SK-N-SH (cell line): ENCODE measurements at regions of chr20 and their contacts with region 1.

Region 1: GRCh38 chr20:63471983-63472831 is at the start of gene KCNQ2:
- DNase-seq: peak; percentile 87
- H3K4me3 ChIP-seq: peak within 1 kb of the TSS in 1 of 2 experiments; percentile 56; a peak in 2 of 4 replicates
- H3K27ac ChIP-seq: peak within 1 kb of the TSS in 1 of 2 experiments; percentile 86; a peak in 2 of 4 replicates
- H3K4me1 ChIP-seq: peaks cover 0 to 55% of the 10 kb centered on the region in 2 experiments; a peak in 1 of 4 replicates
- H3K27me3 ChIP-seq: peaks cover 26% of the 10 kb centered on the region
- CTCF ChIP-seq: no peak
- EP300 ChIP-seq: no peak
- RAD21 ChIP-seq: no peak
- polyA plus RNA-seq, gene KCNQ2: 3.9 and 8.3 TPM in 2 replicates

Region 2: DNA sequence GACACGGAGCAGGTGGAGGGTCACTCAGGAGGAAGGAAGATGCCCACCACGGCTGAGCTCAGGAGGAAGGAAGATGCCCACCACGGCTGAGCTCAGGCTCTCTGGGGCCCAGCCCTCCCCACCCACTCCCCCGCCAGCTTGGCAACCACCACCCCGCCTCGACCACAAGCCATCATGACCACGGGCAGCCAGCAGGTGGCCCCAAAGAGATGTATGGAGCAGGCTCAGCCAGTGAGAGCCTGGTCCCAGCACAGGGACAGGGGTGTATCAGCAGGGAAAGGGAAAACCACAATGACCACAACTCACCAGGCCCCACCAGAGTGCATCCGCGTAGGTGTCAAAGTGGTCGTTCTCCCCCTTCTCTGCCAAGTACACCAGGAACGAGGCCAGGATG is 30.1 kb before region 1 on chr20:
- CTCF ChIA-PET with region 1: interaction called, 15 read pairs
- POLR2A ChIA-PET with region 1: no interaction called
- DNase-seq: peak; percentile 86
- H3K4me3 ChIP-seq: no peak overlapping the region
- H3K27ac ChIP-seq: peak overlapping the region in 1 of 2 experiments; percentile 62; a peak in 1 of 4 replicates
- H3K4me1 ChIP-seq: peaks cover 0 to 32% of the 10 kb centered on the region in 2 experiments; a peak in 1 of 4 replicates
- H3K27me3 ChIP-seq: no peaks in the 10 kb centered on the region
- CTCF ChIP-seq: peak; percentile 32
- EP300 ChIP-seq: no peak
- RAD21 ChIP-seq: peak; percentile 71

Region 3: GRCh38 chr20:63457737-63458136 is 14.5 kb before region 1 on chr20:
- CTCF ChIA-PET with region 1: interaction called, 12 read pairs
- POLR2A ChIA-PET with region 1: interaction called, 8 read pairs
- DNase-seq: peak; percentile 69
- H3K4me3 ChIP-seq: no peak overlapping the region
- H3K27ac ChIP-seq: peak overlapping the region in 1 of 2 experiments; percentile 99; a peak in 2 of 4 replicates
- H3K4me1 ChIP-seq: peaks cover 9 to 96% of the 10 kb centered on the region in 2 experiments; a peak in 2 of 4 replicates
- H3K27me3 ChIP-seq: no peaks in the 10 kb centered on the region; the same call in 1 of the 2 replicates
- CTCF ChIP-seq: no peak
- EP300 ChIP-seq: no peak
- RAD21 ChIP-seq: no peak

Region 4: GRCh38 chr20:63482856-63483695 is 10.9 kb after region 1 on chr20:
- CTCF ChIA-PET with region 1: interaction called, 12 read pairs
- POLR2A ChIA-PET with region 1: interaction called, 5 read pairs
- DNase-seq: peak; percentile 93
- H3K4me3 ChIP-seq: no peak overlapping the region
- H3K27ac ChIP-seq: peak overlapping the region in 1 of 2 experiments; percentile 54; a peak in 2 of 4 replicates
- H3K4me1 ChIP-seq: peaks cover 0 to 56% of the 10 kb centered on the region in 2 experiments; a peak in 1 of 4 replicates
- H3K27me3 ChIP-seq: no peaks in the 10 kb centered on the region
- CTCF ChIP-seq: no peak
- EP300 ChIP-seq: no peak
- RAD21 ChIP-seq: peak; percentile 30; the same call in 1 of the 2 replicates

Region 5: DNA sequence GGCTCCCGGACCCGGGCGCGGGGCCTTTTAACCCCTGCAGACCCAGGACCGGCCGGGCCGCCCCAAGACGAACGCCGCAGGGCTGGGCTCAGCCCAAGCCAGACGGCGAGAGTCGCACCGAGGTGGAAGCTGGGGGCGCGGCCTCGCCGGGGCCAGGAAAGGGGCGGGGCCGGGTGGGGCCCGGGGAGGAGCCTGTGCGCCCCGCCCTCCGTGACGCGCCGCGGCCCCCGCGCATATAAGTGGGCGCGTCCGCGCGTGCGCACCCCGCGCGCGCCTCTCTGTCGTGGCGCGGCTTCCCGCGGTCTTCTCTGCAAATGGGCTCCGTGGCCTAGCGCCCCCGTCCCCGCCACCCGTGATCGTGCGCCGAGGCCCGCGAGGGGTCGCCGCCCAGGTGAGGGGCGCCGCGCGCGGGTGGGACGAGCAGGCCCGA is 48.3 kb after region 1 on chr20 and contains the start of gene PPDPF:
- CTCF ChIA-PET with region 1: interaction called, 12 read pairs
- POLR2A ChIA-PET with region 1: interaction called, 6 read pairs
- DNase-seq: peak; percentile 100
- H3K4me3 ChIP-seq: peak within 1 kb of the TSS; percentile 84 to 85
- H3K27ac ChIP-seq: peak within 1 kb of the TSS; percentile 66 to 81
- H3K4me1 ChIP-seq: peaks cover 4 to 26% of the 10 kb centered on the region in 2 experiments; a peak in 3 of 4 replicates
- H3K27me3 ChIP-seq: no peaks in the 10 kb centered on the region
- CTCF ChIP-seq: no peak
- EP300 ChIP-seq: no peak
- RAD21 ChIP-seq: no peak
- polyA plus RNA-seq, gene PPDPF: 20.0 and 71.4 TPM in 2 replicates

Region 6: GRCh38 chr20:63580796-63581461 is 108.7 kb after region 1 on chr20:
- CTCF ChIA-PET with region 1: no interaction called
- POLR2A ChIA-PET with region 1: no interaction called
- DNase-seq: peak; percentile 52
- H3K4me3 ChIP-seq: no peak overlapping the region
- H3K27ac ChIP-seq: no peak overlapping the region
- H3K4me1 ChIP-seq: peaks cover 0 to 21% of the 10 kb centered on the region in 2 experiments; a peak in 1 of 4 replicates
- H3K27me3 ChIP-seq: no peaks in the 10 kb centered on the region
- CTCF ChIP-seq: peak; percentile 43
- EP300 ChIP-seq: no peak
- RAD21 ChIP-seq: peak; percentile 71

Region 7: GRCh38 chr20:63641792-63642544 is 169.8 kb after region 1 on chr20:
- CTCF ChIA-PET with region 1: no interaction called
- POLR2A ChIA-PET with region 1: no interaction called
- DNase-seq: peak; percentile 99
- H3K4me3 ChIP-seq: peak overlapping the region in 1 of 2 experiments; percentile 44; a peak in 2 of 4 replicates
- H3K27ac ChIP-seq: no peak overlapping the region; a peak in 1 of 4 replicates
- H3K4me1 ChIP-seq: peaks cover 0 to 13% of the 10 kb centered on the region in 2 experiments; a peak in 1 of 4 replicates
- H3K27me3 ChIP-seq: no peaks in the 10 kb centered on the region
- CTCF ChIP-seq: peak; percentile 17
- EP300 ChIP-seq: no peak
- RAD21 ChIP-seq: no peak